Activated CD4-positive, alpha-beta T cell treated with anti-CD3 and anti-CD28 coated beads, Interleukin-2, amount 10 ng/mL, durations not matched to agents 24 days and 14 days (primary cell): ENCODE measurements at regions of chr9 and their contacts with region 1.

Region 1: GRCh38 chr9:87464110-87464965 is 33.3 kb upstream of the DAPK1 start:
- DNase-seq: peak; percentile 58
- H3K4me3 Mint-ChIP-seq: no peak overlapping the region
- H3K27ac Mint-ChIP-seq: peak overlapping the region; percentile 71
- H3K4me1 Mint-ChIP-seq: peaks cover 8% of the 10 kb centered on the region
- H3K27me3 Mint-ChIP-seq: no peaks in the 10 kb centered on the region

Region 2: GRCh38 chr9:87372337-87372851 is 91.9 kb before region 1 on chr9:
- intact Hi-C with region 1: loop called (anchors 5 kb)
- DNase-seq: no peak
- H3K4me3 Mint-ChIP-seq: no peak overlapping the region
- H3K27ac Mint-ChIP-seq: no peak overlapping the region
- H3K4me1 Mint-ChIP-seq: peaks cover 8% of the 10 kb centered on the region
- H3K27me3 Mint-ChIP-seq: peaks cover 10% of the 10 kb centered on the region

Region 3: GRCh38 chr9:87500491-87501270 is 36.3 kb after region 1 on chr9:
- intact Hi-C with region 1: loop called (anchors 1 kb)
- DNase-seq: no peak
- H3K4me3 Mint-ChIP-seq: no peak overlapping the region
- H3K27ac Mint-ChIP-seq: no peak overlapping the region
- H3K4me1 Mint-ChIP-seq: peaks cover 12% of the 10 kb centered on the region
- H3K27me3 Mint-ChIP-seq: peaks cover 51% of the 10 kb centered on the region

Region 4: GRCh38 chr9:87535817-87536539 is 71.6 kb after region 1 on chr9:
- intact Hi-C with region 1: loop called (anchors 1 kb)
- DNase-seq: peak; percentile 66
- H3K4me3 Mint-ChIP-seq: no peak overlapping the region
- H3K27ac Mint-ChIP-seq: peak overlapping the region; percentile 89
- H3K4me1 Mint-ChIP-seq: peaks cover 5% of the 10 kb centered on the region
- H3K27me3 Mint-ChIP-seq: no peaks in the 10 kb centered on the region

Region 5: DNA sequence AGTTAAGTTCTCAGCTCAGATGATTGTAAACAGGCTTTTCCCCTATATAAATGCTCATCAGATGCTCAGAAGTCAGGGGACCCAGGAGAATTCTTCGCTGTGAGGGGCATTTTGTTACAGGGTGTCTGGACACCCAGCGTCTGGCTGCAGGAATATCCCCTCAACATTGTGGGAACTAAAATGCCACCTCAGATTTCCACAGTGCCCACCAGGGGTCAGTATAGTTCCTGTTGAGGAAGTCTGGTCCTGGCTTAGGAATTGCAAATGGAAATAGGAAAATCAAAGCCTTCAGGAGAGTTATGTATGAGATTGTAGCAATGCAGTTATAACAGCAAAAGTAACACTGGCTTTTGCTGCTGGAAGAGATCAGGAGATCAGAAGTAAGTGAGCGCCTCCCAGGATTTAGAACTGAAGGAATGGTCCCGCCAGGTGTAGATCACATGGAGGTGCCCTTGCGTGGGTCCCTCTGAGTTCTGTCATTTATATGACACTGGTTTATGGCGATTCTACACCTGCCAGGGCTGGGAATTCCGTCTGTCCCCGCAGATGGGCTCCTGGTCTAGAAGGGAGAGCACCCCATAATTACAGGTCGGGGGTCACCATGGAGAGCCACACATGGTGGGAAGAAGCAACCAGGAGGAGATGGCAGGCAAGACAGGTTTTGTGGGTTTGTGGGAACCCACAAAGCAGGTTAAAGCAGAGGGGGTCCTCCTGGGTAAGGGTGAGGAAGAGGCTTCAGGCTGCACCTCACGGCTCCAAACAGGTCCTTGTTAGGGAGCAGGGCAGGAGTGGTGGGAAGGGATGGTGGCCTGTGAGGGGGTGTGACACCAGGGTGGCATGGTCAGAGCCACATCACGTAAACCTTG is 214.5 kb after region 1 on chr9:
- intact Hi-C with region 1: no loop called
- DNase-seq: peak; percentile 72
- H3K4me3 Mint-ChIP-seq: no peak overlapping the region
- H3K27ac Mint-ChIP-seq: no peak overlapping the region
- H3K4me1 Mint-ChIP-seq: peaks cover 3% of the 10 kb centered on the region
- H3K27me3 Mint-ChIP-seq: peaks cover 2% of the 10 kb centered on the region